CD14-positive monocyte (primary cell): ENCODE measurements at regions of chr10 and their contacts with region 1.

Region 1: DNA sequence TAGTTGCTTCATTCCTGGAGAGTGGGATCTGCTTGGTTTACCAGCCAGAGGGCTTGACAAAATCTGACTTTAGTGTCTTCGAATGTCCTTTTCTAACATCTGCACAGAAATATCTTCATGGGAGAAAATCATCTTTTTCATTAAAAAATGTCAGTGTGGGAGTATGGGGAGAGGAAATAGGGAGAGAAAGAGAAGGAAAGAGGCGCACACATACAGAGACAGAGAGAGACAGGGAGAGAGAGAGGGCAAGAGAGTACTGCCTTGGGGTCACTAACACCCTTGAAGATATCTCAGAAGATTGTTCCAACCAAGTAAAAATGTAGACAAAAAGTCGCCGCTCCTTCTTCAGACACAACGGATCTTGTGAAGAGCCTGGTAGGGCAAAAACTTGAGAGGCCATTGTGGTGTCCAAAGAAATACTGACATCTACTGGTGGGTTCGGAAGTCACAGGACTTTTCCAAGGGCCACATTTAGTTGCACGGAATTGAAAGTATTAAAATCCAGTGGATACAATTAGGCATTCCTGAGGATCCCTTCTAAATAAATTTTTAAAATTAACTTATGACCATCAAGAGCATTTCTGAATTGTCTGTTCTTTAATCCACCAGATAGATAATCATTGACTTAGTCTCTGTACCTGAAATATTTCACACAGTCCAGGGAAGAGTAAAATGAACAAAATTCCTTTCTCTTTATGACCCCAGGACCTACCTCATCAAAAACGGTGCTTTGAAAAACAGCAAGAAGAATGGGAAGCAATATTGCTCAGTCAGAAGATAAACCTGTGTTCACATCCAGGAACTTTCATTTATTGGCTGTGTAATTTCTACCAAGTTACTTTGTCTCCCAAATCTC is 29.7 kb downstream of the VIM start:
- DNase-seq: peak; percentile 58 to 72 (median 69)
- H3K4me3 ChIP-seq: no peak overlapping the region
- H3K4me3 Mint-ChIP-seq: peak overlapping the region in 1 of 2 donors; percentile 31
- H3K27ac ChIP-seq: no peak overlapping the region
- H3K27ac Mint-ChIP-seq: peak overlapping the region in 4 of 7 donors; percentile 0 to 76 (median 14)
- H3K4me1 ChIP-seq: no peaks in the 10 kb centered on the region
- H3K4me1 Mint-ChIP-seq: peaks cover 6% of the 10 kb centered on the region
- H3K27me3 ChIP-seq: no peaks in the 10 kb centered on the region
- H3K27me3 Mint-ChIP-seq: peaks cover 0 to 4% (median 2%) of the 10 kb centered on the region in 3 donors
- CTCF ChIP-seq: peak; percentile 78

Region 2: GRCh38 chr10:16828114-16828568 is 429.6 kb before region 1 on chr10:
- intact Hi-C with region 1: loop called in 1 of 2 experiments (anchors 5 kb)
- DNase-seq: peak; percentile 51 to 83 (median 72)
- H3K4me3 ChIP-seq: no peak overlapping the region
- H3K4me3 Mint-ChIP-seq: no peak overlapping the region
- H3K27ac ChIP-seq: no peak overlapping the region
- H3K27ac Mint-ChIP-seq: peak overlapping the region in 1 of 7 donors; percentile 50
- H3K4me1 ChIP-seq: no peaks in the 10 kb centered on the region
- H3K4me1 Mint-ChIP-seq: peaks cover 12% of the 10 kb centered on the region
- H3K27me3 ChIP-seq: no peaks in the 10 kb centered on the region
- H3K27me3 Mint-ChIP-seq: peaks cover 2 to 5% (median 2%) of the 10 kb centered on the region in 3 donors
- CTCF ChIP-seq: peak; percentile 72

Region 3: GRCh38 chr10:16843252-16843870 is 414.3 kb before region 1 on chr10:
- intact Hi-C with region 1: loop called (anchors 2 kb)
- DNase-seq: peak; percentile 50 to 94 (median 72)
- H3K4me3 ChIP-seq: no peak overlapping the region
- H3K4me3 Mint-ChIP-seq: no peak overlapping the region
- H3K27ac ChIP-seq: no peak overlapping the region
- H3K27ac Mint-ChIP-seq: peak overlapping the region in 1 of 7 donors; percentile 2
- H3K4me1 ChIP-seq: no peaks in the 10 kb centered on the region
- H3K4me1 Mint-ChIP-seq: no peaks in the 10 kb centered on the region
- H3K27me3 ChIP-seq: no peaks in the 10 kb centered on the region
- H3K27me3 Mint-ChIP-seq: peaks cover 0 to 3% (median 0%) of the 10 kb centered on the region in 3 donors
- CTCF ChIP-seq: peak; percentile 77

Region 4: DNA sequence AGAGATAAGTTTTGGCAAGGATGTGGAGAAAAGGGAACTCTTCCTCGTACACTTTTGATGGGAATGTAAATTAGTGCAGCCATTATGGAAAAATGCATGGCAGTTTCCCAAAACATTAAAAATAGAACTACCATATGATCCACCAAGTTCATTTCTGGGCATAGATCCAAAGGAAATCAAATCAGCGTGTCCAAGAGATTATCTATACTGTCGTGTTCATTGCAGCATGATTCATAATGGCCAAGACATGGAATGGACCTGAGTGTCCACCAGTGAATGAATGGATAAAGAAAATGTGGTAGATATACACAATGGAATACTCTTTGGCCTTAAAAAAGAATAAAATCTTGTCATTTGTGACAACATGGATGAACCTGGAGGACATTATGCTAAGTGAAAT is 370.1 kb before region 1 on chr10:
- intact Hi-C with region 1: loop called in 1 of 2 experiments (anchors 10 kb)
- DNase-seq: no peak
- H3K4me3 ChIP-seq: no peak overlapping the region
- H3K4me3 Mint-ChIP-seq: no peak overlapping the region
- H3K27ac ChIP-seq: no peak overlapping the region
- H3K27ac Mint-ChIP-seq: no peak overlapping the region
- H3K4me1 ChIP-seq: peaks cover 3 to 9% of the 10 kb centered on the region in 2 donors
- H3K4me1 Mint-ChIP-seq: peaks cover 5% of the 10 kb centered on the region
- H3K27me3 ChIP-seq: peaks cover 0 to 4% of the 10 kb centered on the region in 2 donors
- H3K27me3 Mint-ChIP-seq: peaks cover 4 to 11% (median 8%) of the 10 kb centered on the region in 3 donors
- CTCF ChIP-seq: no peak